ENCODE measurements at regions of chr4 and their contacts with region 1.

Region 1: GRCh38 chr4:63831590-63832155 is 577.6 kb downstream of the TECRL start:
- DNase-seq: no peak
- H3K4me3 Mint-ChIP-seq: no peak overlapping the region
- H3K27ac Mint-ChIP-seq: no peak overlapping the region
- H3K4me1 Mint-ChIP-seq: no peaks in the 10 kb centered on the region
- H3K27me3 Mint-ChIP-seq: no peaks in the 10 kb centered on the region

Region 2: DNA sequence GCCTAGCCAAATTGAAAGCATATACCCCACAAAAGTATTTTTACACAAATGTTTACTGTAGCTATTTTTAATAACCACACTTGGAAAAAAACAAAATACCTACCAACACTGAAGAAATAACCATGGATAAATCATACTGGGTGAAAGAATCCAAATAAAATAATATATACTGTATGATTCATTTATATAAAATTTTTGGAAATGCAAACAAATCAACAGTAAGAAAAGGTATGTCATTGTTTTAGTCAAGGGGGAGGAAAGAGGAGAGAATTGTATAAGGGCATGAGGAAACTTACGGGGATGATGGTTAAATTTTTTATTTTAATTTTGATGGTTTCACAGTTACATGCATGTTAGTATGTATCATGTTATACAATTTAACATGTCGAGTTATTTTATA is 19.8 kb after region 1 on chr4:
- CTCF ChIA-PET with region 1: no interaction called
- POLR2A ChIA-PET with region 1: no interaction called
- intact Hi-C with region 1: loop called (anchors 2 kb)
- DNase-seq: no peak
- H3K4me3 Mint-ChIP-seq: no peak overlapping the region
- H3K27ac Mint-ChIP-seq: no peak overlapping the region
- H3K4me1 Mint-ChIP-seq: no peaks in the 10 kb centered on the region
- H3K27me3 Mint-ChIP-seq: no peaks in the 10 kb centered on the region

Region 3: GRCh38 chr4:63869370-63869769 is 37.7 kb after region 1 on chr4:
- CTCF ChIA-PET with region 1: no interaction called
- POLR2A ChIA-PET with region 1: no interaction called
- intact Hi-C with region 1: loop called (anchors 5 kb)
- DNase-seq: no peak
- H3K4me3 Mint-ChIP-seq: no peak overlapping the region
- H3K27ac Mint-ChIP-seq: no peak overlapping the region
- H3K4me1 Mint-ChIP-seq: no peaks in the 10 kb centered on the region
- H3K27me3 Mint-ChIP-seq: no peaks in the 10 kb centered on the region

Region 4: DNA sequence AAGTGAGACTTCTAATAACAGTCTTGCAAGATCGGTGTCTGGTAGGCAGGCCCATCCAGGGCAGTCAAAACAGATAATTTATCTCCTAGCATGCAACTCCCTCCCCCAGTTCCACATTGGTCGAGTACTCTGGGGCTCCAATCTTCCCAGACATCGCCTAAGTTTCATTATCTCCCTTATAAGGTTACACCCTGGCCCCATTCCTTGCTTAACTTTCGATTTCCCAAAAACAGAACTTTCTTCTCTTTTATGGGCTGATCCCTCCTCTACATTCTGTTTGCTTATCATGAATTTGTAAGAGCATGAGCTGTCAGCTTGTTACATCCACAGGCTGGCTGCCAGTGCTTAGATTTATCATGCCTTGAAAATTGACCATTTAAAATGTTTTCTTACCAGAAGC is 106.3 kb after region 1 on chr4:
- CTCF ChIA-PET with region 1: no interaction called
- POLR2A ChIA-PET with region 1: no interaction called
- intact Hi-C with region 1: no loop called
- DNase-seq: no peak
- H3K4me3 Mint-ChIP-seq: no peak overlapping the region
- H3K27ac Mint-ChIP-seq: no peak overlapping the region
- H3K4me1 Mint-ChIP-seq: no peaks in the 10 kb centered on the region
- H3K27me3 Mint-ChIP-seq: no peaks in the 10 kb centered on the region